K562 (cell line): ENCODE measurements at regions of chr7 and their contacts with region 1.

Region 1: GRCh38 chr7:5363729-5364128 is 59.9 kb downstream of the TNRC18 start:
- DNase-seq: no peak
- ATAC-seq: no peak
- H3K4me3 ChIP-seq: no peak overlapping the region
- H3K27ac ChIP-seq: no peak overlapping the region
- H3K4me1 ChIP-seq: no peaks in the 10 kb centered on the region
- H3K27me3 ChIP-seq: no peaks in the 10 kb centered on the region
- CTCF ChIP-seq: no peak
- EP300 ChIP-seq: no peak
- POLR2A ChIP-seq: no peak
- RAD21 ChIP-seq: no peak

Region 2: GRCh38 chr7:5237286-5237685 is 126.4 kb before region 1 on chr7:
- CTCF ChIA-PET with region 1: interaction called, 5 read pairs
- POLR2A ChIA-PET with region 1: no interaction called
- in situ Hi-C with region 1: no loop called
- intact Hi-C with region 1: loop called (anchors 1 kb)
- DNase-seq: no peak
- ATAC-seq: no peak
- H3K4me3 ChIP-seq: no peak overlapping the region
- H3K27ac ChIP-seq: no peak overlapping the region
- H3K4me1 ChIP-seq: peaks cover 6 to 14% of the 10 kb centered on the region in 2 experiments; a peak in 3 of 5 replicates
- H3K27me3 ChIP-seq: peaks cover 0 to 5% of the 10 kb centered on the region in 2 experiments; a peak in 1 of 5 replicates
- CTCF ChIP-seq: no peak
- EP300 ChIP-seq: no peak
- POLR2A ChIP-seq: no peak
- RAD21 ChIP-seq: no peak

Region 3: DNA sequence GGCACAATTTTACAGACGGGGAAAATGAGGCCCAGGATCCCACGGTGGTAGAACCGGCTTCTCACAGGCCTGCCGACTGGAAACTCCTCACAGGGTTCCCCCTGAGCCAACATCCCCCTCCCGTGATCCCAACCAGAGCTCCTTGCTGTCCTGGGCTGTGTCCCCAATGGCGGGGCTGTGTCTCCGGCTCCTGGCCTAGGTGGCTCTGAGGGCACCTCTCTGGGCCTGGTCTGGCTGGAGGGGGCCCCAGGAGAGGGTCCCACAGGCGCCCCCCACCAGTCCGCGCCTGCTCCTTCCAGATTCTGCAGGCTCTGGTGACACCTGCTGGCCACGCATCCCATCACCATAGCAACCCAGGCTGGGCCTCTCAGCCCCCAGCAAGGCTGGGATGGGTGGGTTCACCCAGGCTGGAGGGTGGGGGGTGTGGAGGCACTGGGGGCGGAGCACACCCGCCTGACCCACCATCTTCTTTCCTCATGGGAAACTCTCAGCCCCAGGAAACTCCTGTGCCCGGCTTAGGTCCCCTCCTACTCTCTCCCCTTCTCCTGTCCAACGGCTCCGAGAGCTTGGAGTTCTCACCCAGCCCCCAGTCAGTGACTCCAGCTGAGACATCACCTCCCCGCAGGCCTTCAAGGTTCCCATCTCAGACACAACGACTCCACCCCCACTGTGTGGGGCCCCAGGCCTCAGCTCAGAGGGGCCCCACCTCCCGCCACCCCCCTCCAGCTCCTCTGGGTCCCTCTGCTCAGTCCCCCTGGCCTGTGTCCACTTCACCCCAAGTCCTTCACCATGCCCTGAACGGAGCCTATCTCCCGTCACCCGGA is 87.0 kb after region 1 on chr7:
- CTCF ChIA-PET with region 1: interaction called, 8 read pairs
- POLR2A ChIA-PET with region 1: no interaction called
- in situ Hi-C with region 1: no loop called
- intact Hi-C with region 1: loop called (anchors 1 kb)
- DNase-seq: peak; percentile 60 to 69 (median 66)
- ATAC-seq: peak; percentile 84
- H3K4me3 ChIP-seq: no peak overlapping the region
- H3K27ac ChIP-seq: no peak overlapping the region
- H3K4me1 ChIP-seq: peaks cover 19 to 52% of the 10 kb centered on the region in 2 experiments
- H3K27me3 ChIP-seq: no peaks in the 10 kb centered on the region
- CTCF ChIP-seq: peak; percentile 69 to 77 (median 75)
- EP300 ChIP-seq: no peak
- POLR2A ChIP-seq: no peak
- RAD21 ChIP-seq: peak; percentile 67 to 85

Region 4: DNA sequence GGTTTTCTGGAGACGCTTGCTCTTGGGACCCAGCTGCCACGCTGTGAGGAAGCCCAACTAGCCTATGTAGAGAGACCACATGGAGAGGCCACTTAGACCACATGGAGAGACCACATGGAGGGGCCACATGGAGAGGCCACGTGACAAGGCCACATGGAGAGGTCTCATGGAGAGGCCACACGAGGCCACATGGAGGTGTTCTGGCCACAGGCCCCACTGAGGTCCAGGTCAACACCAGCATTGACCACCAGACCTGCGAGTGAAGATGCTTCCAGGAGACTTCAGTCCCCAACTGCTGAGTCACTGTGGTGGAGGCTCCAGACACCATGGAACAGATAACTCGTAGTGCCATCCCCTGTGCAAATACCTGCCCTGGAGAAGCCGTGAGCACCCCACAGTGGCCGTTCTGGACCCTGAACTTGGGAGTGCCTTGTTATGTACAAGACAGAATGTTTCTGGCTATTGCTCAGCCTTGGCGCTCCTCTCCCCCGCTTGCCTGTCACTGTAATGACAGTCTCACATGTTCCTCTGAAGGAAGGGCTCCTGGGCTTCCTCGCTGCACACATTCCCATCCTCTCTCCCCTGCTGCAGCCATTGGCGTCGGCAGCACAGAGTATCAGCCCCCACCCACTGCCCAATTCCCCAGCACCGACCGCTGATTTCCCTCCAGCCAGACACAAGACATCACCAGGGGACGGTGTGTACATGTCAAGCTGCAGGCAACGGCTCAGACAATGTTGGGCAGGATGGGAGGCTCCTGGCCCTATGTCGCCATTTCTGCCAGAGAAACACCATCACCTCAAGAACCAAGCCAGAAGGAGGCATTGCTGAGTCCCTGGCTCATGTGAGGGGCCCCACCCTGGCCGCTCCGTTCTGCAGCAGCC is 108.9 kb after region 1 on chr7:
- CTCF ChIA-PET with region 1: interaction called, 3 read pairs
- POLR2A ChIA-PET with region 1: interaction called, 3 read pairs
- in situ Hi-C with region 1: no loop called
- intact Hi-C with region 1: loop called (anchors 1 kb)
- DNase-seq: peak; percentile 74 to 86 (median 82)
- ATAC-seq: peak; percentile 97
- H3K4me3 ChIP-seq: no peak overlapping the region
- H3K27ac ChIP-seq: peak overlapping the region; percentile 56; the same call in 2 of the 3 replicates
- H3K4me1 ChIP-seq: peaks cover 3 to 35% of the 10 kb centered on the region in 2 experiments; a peak in 4 of 5 replicates
- H3K27me3 ChIP-seq: no peaks in the 10 kb centered on the region
- CTCF ChIP-seq: peak; percentile 68 to 79 (median 70)
- EP300 ChIP-seq: peak; percentile 61; the same call in 1 of the 2 replicates
- POLR2A ChIP-seq: no peak
- RAD21 ChIP-seq: peak; percentile 75 to 90

Region 5: GRCh38 chr7:5704534-5704922 is 340.8 kb after region 1 on chr7:
- CTCF ChIA-PET with region 1: no interaction called
- POLR2A ChIA-PET with region 1: no interaction called
- in situ Hi-C with region 1: no loop called
- intact Hi-C with region 1: loop called (anchors 10 kb)
- DNase-seq: peak; percentile 62 to 85 (median 70)
- ATAC-seq: peak; percentile 96
- H3K4me3 ChIP-seq: no peak overlapping the region
- H3K27ac ChIP-seq: no peak overlapping the region; the same call in 2 of the 3 replicates
- H3K4me1 ChIP-seq: peaks cover 0 to 3% of the 10 kb centered on the region in 2 experiments; a peak in 3 of 5 replicates
- H3K27me3 ChIP-seq: no peaks in the 10 kb centered on the region
- CTCF ChIP-seq: peak; percentile 78 to 95 (median 91)
- EP300 ChIP-seq: no peak
- POLR2A ChIP-seq: no peak
- RAD21 ChIP-seq: peak; percentile 80 to 89